CD4-positive, alpha-beta memory T cell (primary cell): ENCODE measurements at regions of chr10 and their contacts with region 1.

Region 1: GRCh38 chr10:120942806-120943413 is 91.7 kb downstream of the WDR11 start:
- DNase-seq: peak; percentile 52 to 64 (median 61)
- H3K4me3 ChIP-seq: no peak overlapping the region
- H3K4me3 Mint-ChIP-seq: peak overlapping the region in 6 of 8 donors; percentile 6 to 64 (median 38)
- H3K27ac ChIP-seq: no peak overlapping the region
- H3K27ac Mint-ChIP-seq: peak overlapping the region in 1 of 7 donors; percentile 4
- H3K4me1 ChIP-seq: peaks cover 4% of the 10 kb centered on the region
- H3K4me1 Mint-ChIP-seq: peaks cover 0 to 6% (median 5%) of the 10 kb centered on the region in 4 donors
- H3K27me3 ChIP-seq: no peaks in the 10 kb centered on the region
- H3K27me3 Mint-ChIP-seq: peaks cover 4 to 7% of the 10 kb centered on the region in 2 donors

Region 2: GRCh38 chr10:120873734-120874133 is 69.2 kb before region 1 on chr10:
- CTCF ChIA-PET with region 1: no interaction called
- POLR2A ChIA-PET with region 1: no interaction called
- intact Hi-C with region 1: no loop called
- DNase-seq: no peak
- H3K4me3 ChIP-seq: no peak overlapping the region
- H3K4me3 Mint-ChIP-seq: no peak overlapping the region
- H3K27ac ChIP-seq: no peak overlapping the region
- H3K27ac Mint-ChIP-seq: no peak overlapping the region
- H3K4me1 ChIP-seq: no peaks in the 10 kb centered on the region
- H3K4me1 Mint-ChIP-seq: peaks cover 0 to 3% (median 0%) of the 10 kb centered on the region in 4 donors
- H3K27me3 ChIP-seq: no peaks in the 10 kb centered on the region
- H3K27me3 Mint-ChIP-seq: no peaks in the 10 kb centered on the region

Region 3: DNA sequence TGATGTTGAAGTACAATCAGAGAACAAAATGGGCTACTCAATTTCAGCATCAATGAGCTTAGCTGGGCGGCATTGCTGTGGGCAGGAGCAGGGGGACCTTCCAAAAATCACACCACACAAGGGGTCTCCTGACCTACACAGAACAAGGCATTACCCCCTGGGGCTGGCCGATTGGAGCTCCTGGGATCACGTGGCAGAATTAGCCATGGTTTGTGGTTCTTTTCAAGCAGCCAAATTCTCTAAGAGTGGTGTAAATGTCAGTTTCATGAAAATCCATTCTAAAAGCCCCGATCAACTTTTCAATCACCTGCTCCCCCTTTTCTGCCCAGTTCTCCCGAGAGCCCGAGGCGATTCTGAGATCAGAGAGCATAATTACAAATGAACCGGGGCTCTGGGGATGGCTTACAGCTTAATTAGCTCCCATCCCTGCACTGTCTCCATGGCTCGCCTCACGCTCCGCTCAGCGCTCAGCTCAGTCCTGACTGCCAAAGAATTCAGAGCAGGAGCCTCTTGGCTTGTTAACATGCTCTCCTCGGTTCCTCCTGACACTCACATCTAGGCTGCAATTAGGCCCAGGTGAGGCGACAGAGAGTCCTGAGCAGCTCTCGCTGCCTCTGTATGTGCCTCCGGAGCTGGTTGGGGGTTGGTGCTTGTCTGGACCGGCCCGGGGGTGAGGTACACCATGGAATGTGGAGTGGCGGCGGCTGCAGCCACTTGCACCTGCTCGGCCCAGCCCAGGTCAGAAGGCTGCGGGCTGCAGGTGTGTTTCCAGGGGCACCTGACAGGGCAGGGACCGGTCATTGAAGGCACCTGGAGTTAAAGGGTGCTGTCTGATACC is 20.1 kb after region 1 on chr10:
- CTCF ChIA-PET with region 1: no interaction called
- POLR2A ChIA-PET with region 1: no interaction called
- intact Hi-C with region 1: no loop called
- DNase-seq: no peak
- H3K4me3 ChIP-seq: no peak overlapping the region
- H3K4me3 Mint-ChIP-seq: no peak overlapping the region
- H3K27ac ChIP-seq: no peak overlapping the region
- H3K27ac Mint-ChIP-seq: no peak overlapping the region
- H3K4me1 ChIP-seq: no peaks in the 10 kb centered on the region
- H3K4me1 Mint-ChIP-seq: no peaks in the 10 kb centered on the region
- H3K27me3 ChIP-seq: no peaks in the 10 kb centered on the region
- H3K27me3 Mint-ChIP-seq: peaks cover 1 to 5% of the 10 kb centered on the region in 2 donors

Region 4: GRCh38 chr10:121063744-121064143 is 120.8 kb after region 1 on chr10:
- CTCF ChIA-PET with region 1: no interaction called
- POLR2A ChIA-PET with region 1: no interaction called
- intact Hi-C with region 1: no loop called
- DNase-seq: no peak
- H3K4me3 ChIP-seq: no peak overlapping the region
- H3K4me3 Mint-ChIP-seq: no peak overlapping the region
- H3K27ac ChIP-seq: no peak overlapping the region
- H3K27ac Mint-ChIP-seq: no peak overlapping the region
- H3K4me1 ChIP-seq: no peaks in the 10 kb centered on the region
- H3K4me1 Mint-ChIP-seq: no peaks in the 10 kb centered on the region
- H3K27me3 ChIP-seq: no peaks in the 10 kb centered on the region
- H3K27me3 Mint-ChIP-seq: no peaks in the 10 kb centered on the region

Region 5: GRCh38 chr10:121886997-121887622 is 944.2 kb after region 1 on chr10:
- CTCF ChIA-PET with region 1: interaction called, 6 read pairs
- POLR2A ChIA-PET with region 1: no interaction called
- intact Hi-C with region 1: loop called (anchors 1 kb)
- DNase-seq: peak in 4 of 5 donors; percentile 17 to 26 (median 24)
- H3K4me3 ChIP-seq: no peak overlapping the region
- H3K4me3 Mint-ChIP-seq: no peak overlapping the region
- H3K27ac ChIP-seq: no peak overlapping the region
- H3K27ac Mint-ChIP-seq: peak overlapping the region in 1 of 7 donors; percentile 52
- H3K4me1 ChIP-seq: no peaks in the 10 kb centered on the region
- H3K4me1 Mint-ChIP-seq: peaks cover 0 to 5% (median under 1%) of the 10 kb centered on the region in 4 donors
- H3K27me3 ChIP-seq: no peaks in the 10 kb centered on the region
- H3K27me3 Mint-ChIP-seq: no peaks in the 10 kb centered on the region